PC-3 (cell line): ENCODE measurements at regions of chr6 and their contacts with region 1.

Region 1: GRCh38 chr6:10411971-10412745 is 2.7 kb downstream of the TFAP2A start:
- DNase-seq: peak; percentile 84
- ATAC-seq: peak; percentile 25
- H3K4me3 ChIP-seq: peak overlapping the region; percentile 91
- H3K27ac ChIP-seq: peak overlapping the region; percentile 98
- H3K4me1 ChIP-seq: peaks cover 34% of the 10 kb centered on the region
- H3K27me3 ChIP-seq: no peaks in the 10 kb centered on the region
- CTCF ChIP-seq: no peak

Region 2: DNA sequence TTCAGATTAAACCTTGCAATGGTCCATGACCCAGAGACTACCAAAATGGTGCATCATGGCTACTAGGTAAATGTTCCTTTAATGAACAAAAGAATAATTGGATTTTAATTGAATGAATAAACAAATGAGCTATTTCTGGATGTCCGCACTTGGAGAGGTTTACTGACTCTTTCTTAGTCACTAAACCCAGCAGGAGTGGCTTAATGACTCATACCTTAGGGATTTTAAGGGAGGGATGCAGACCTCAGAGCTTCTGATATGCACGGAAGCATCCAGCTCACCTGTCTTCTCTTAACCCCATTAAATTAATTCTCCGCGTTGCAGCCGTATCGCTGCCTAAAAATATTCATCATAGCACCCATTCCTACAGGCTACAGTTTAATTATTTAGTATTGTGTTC is 1006.8 kb before region 1 on chr6:
- CTCF ChIA-PET with region 1: no interaction called
- POLR2A ChIA-PET with region 1: interaction called, 3 read pairs
- intact Hi-C with region 1: loop called (anchors 5 kb)
- DNase-seq: peak; percentile 95
- ATAC-seq: peak; percentile 83
- H3K4me3 ChIP-seq: peak overlapping the region; percentile 38
- H3K27ac ChIP-seq: peak overlapping the region; percentile 97
- H3K4me1 ChIP-seq: peaks cover 68% of the 10 kb centered on the region
- H3K27me3 ChIP-seq: no peaks in the 10 kb centered on the region
- CTCF ChIP-seq: no peak

Region 3: GRCh38 chr6:10030942-10031537 is 381.1 kb before region 1 on chr6:
- CTCF ChIA-PET with region 1: interaction called, 11 read pairs
- POLR2A ChIA-PET with region 1: no interaction called
- intact Hi-C with region 1: loop called (anchors 5 kb)
- DNase-seq: peak; percentile 71
- ATAC-seq: no peak
- H3K4me3 ChIP-seq: no peak overlapping the region
- H3K27ac ChIP-seq: no peak overlapping the region
- H3K4me1 ChIP-seq: peaks cover 16% of the 10 kb centered on the region
- H3K27me3 ChIP-seq: peaks cover 31% of the 10 kb centered on the region
- CTCF ChIP-seq: peak; percentile 79

Region 4: DNA sequence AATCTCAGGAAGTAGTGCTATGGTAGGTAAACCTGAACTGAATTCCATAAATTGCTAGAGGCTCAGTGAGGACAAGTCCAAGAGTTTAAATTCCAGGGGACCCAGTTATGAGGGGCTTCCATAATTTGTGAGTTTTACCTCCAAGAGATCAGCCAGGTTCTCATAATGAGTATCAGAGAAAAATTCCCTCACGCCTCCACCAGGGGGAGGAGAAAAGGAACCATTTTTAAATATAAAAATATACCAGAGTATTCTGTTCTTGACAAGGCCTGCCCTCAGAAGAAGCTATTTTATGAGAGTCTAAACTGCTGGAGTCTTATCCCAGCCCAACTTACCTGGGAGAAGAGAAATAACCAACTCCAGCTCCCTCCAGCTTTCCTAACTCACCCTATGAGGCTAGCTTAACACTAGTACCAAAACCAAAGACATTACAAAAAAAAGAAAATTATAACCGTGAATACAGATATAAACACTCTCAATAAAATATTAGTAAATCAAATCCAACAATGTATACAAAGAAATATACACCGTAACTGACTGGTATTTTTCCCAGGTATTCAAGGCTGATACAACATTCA is 156.0 kb before region 1 on chr6:
- CTCF ChIA-PET with region 1: interaction called, 10 read pairs
- POLR2A ChIA-PET with region 1: no interaction called
- intact Hi-C with region 1: loop called (anchors 1 kb)
- DNase-seq: peak; percentile 63
- ATAC-seq: peak; percentile 64
- H3K4me3 ChIP-seq: no peak overlapping the region
- H3K27ac ChIP-seq: no peak overlapping the region
- H3K4me1 ChIP-seq: no peaks in the 10 kb centered on the region
- H3K27me3 ChIP-seq: no peaks in the 10 kb centered on the region
- CTCF ChIP-seq: peak; percentile 71

Region 5: GRCh38 chr6:10434692-10435376 is 22.7 kb after region 1 on chr6:
- CTCF ChIA-PET with region 1: interaction called, 22 read pairs
- POLR2A ChIA-PET with region 1: interaction called, 6 read pairs
- intact Hi-C with region 1: no loop called
- DNase-seq: peak; percentile 68
- ATAC-seq: peak; percentile 47
- H3K4me3 ChIP-seq: peak overlapping the region; percentile 58
- H3K27ac ChIP-seq: no peak overlapping the region
- H3K4me1 ChIP-seq: peaks cover 14% of the 10 kb centered on the region
- H3K27me3 ChIP-seq: no peaks in the 10 kb centered on the region
- CTCF ChIP-seq: peak; percentile 82